Tibial artery (tissue), 4 donors: ENCODE measurements at regions of chr2 and their contacts with region 1.

Region 1: GRCh38 chr2:218301176-218301819 is 9.0 kb upstream of the TMBIM1 start:
- DNase-seq: peak; percentile 87 to 88
- H3K4me3 ChIP-seq: no peak overlapping the region
- H3K27ac ChIP-seq: no peak overlapping the region
- H3K4me1 ChIP-seq: peaks cover 0 to 26% (median 9%) of the 10 kb centered on the region in 4 donors
- H3K27me3 ChIP-seq: no peaks in the 10 kb centered on the region
- CTCF ChIP-seq: peak; percentile 96 to 97

Region 2: DNA sequence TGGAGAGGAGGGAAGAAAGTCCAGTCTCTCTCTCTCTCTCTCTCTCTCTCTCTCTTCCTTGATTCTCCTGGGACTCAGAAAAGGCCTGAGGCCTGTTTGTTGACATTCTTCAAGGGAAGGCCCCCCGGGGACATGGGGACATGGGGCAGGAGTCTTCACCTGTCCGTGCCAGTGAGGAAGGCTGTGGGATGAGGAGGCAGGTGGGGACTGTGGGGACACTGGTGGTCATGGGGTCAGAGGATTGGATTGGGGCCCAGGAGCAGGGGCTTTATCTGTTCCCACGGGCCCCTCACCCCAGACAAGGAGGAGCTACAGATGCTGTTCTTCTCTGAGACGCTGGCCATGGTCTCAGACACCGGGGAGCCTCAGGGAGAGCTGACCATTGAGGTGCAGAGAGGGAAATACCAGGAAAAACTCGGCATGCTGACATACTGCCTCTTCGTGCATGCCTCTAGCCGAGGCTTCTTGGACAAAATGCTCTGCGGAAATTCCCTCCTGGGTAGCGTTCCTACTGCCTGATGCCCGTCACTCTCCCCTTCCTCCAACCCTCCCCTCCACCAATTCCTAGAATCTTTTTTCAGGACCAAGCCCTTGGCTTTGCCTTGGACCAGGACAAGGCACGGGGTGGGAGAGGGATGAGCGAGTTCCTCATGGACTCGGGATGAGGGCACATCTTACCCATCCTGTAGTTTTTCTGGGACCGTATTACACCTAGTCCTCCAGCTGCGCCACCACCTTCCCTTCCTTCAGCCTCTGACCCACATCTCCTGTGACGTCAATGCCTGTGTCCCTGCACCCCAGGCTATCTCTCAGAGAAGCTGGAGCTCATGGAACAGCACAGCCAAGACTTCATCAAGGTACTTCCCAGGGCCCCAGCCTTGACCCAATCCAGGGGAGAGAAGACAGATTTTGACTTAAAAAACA is 56.2 kb after region 1 on chr2:
- intact Hi-C with region 1: loop called (anchors 2 kb)
- DNase-seq: no peak
- H3K4me3 ChIP-seq: no peak overlapping the region
- H3K27ac ChIP-seq: no peak overlapping the region
- H3K4me1 ChIP-seq: peaks cover 0 to 13% (median 6%) of the 10 kb centered on the region in 4 donors
- H3K27me3 ChIP-seq: no peaks in the 10 kb centered on the region
- CTCF ChIP-seq: no peak

Region 3: GRCh38 chr2:218395797-218396687 is 94.7 kb after region 1 on chr2:
- intact Hi-C with region 1: loop called (anchors 2 kb)
- DNase-seq: peak; percentile 92 to 97
- H3K4me3 ChIP-seq: peak overlapping the region; percentile 91 to 99
- H3K27ac ChIP-seq: peak overlapping the region; percentile 100
- H3K4me1 ChIP-seq: peaks cover 0 to 21% (median 11%) of the 10 kb centered on the region in 4 donors
- H3K27me3 ChIP-seq: no peaks in the 10 kb centered on the region
- CTCF ChIP-seq: peak; percentile 95

Region 4: DNA sequence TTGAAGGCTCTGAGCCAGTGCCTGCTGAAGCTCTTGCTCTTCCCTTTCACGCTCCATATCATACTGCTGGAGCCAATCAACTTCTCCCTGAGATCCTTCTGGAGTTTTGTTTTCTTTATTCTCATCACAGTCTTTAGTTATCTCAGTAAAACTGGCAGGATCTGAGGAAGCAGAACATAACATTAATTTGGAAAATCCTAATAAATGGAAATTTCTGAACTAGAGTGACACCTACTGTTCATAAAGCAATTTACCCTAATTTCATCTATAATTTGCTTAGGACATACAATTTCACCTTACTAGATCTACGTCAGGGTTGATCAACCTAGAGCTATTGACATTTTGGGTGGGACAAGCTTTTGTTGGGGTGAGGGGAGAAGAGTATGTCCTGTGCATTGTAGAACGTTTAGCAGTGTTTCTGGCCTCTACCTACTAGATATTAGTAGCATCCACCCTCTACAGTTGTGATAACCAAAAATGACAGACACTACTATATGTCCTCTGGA is 164.8 kb after region 1 on chr2:
- intact Hi-C with region 1: loop called (anchors 5 kb)
- DNase-seq: no peak
- H3K4me3 ChIP-seq: no peak overlapping the region
- H3K27ac ChIP-seq: no peak overlapping the region
- H3K4me1 ChIP-seq: no peaks in the 10 kb centered on the region
- H3K27me3 ChIP-seq: no peaks in the 10 kb centered on the region
- CTCF ChIP-seq: peak; percentile 45 to 59